ENCODE measurements at regions of chr16 and their contacts with region 1.

Region 1: DNA sequence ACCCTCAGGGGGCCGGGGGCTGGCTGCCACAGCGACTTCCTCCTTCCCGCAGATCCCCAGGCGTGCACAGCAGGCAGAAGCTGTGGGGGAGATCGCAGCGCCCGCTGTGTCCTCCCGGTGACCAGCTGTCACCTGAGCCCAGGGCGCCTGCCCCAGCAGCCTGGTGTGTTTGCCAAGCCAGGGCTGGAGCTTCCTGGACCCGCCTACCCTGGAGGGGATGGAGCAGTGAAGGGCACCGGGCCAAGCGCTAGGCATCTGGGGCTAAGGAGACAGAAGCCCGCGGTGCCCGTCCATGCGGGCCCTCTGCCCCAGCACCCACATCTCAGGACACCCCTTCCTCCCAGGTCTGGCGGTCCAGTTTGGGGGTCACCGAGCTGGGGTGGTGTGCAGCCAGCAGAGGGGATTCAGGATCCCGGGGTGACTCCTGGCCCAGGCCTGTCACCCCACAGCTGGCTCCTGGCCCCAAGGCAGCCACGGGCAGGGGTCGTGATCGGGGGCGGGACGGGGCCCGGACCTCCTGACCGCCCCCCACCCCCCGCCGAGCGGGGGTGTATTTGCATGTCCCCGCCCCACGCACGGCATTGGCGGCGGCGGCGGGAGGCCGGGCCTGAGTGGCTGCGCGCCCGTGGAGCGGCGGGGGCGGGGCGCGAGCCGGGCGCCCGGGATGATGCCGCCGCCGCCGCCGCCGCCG is at the start of gene RAB26:
- DNase-seq: peak in 1 of 2 experiments; percentile 90
- H3K4me3 ChIP-seq: peak within 1 kb of the TSS; percentile 37 to 85 (median 48)
- H3K27ac ChIP-seq: no peak within 1 kb of the TSS
- H3K4me1 ChIP-seq: peaks cover 3 to 36% (median 27%) of the 10 kb centered on the region in 4 experiments
- H3K27me3 ChIP-seq: peaks cover 0 to 11% (median 5%) of the 10 kb centered on the region in 4 experiments; a peak in 3 of 7 replicates
- CTCF ChIP-seq: no peak
- EP300 ChIP-seq: no peak
- POLR2A ChIP-seq: no peak
- RAD21 ChIP-seq: no peak; a peak in 1 of 4 replicates
- total RNA-seq, gene RAB26: 4.3 and 5.3 TPM in 2 replicates

Region 2: DNA sequence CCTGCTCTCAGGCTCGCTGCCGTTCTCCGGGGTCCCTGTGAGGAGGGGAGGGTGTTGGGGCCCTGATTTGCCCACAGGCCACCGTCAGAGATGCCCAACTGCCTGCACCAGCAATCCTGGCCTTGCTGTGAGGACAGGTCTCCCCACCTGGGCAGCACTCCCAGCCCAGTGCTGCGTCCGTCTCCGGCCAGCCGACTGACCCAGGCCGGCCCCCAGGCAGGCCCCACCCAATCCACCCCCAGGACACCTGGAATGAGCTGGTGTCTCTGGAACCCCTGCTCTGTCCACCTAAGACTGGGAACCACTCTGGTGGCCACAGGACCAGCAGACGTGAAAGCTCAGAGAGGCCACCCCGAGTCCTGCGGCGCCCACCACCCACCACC is 32.5 kb before region 1 on chr16:
- CTCF ChIA-PET with region 1: no interaction called
- POLR2A ChIA-PET with region 1: no interaction called
- DNase-seq: no peak
- H3K4me3 ChIP-seq: no peak overlapping the region
- H3K27ac ChIP-seq: no peak overlapping the region
- H3K4me1 ChIP-seq: no peaks in the 10 kb centered on the region
- H3K27me3 ChIP-seq: no peaks in the 10 kb centered on the region
- CTCF ChIP-seq: no peak
- EP300 ChIP-seq: no peak
- POLR2A ChIP-seq: no peak
- RAD21 ChIP-seq: no peak

Region 3: DNA sequence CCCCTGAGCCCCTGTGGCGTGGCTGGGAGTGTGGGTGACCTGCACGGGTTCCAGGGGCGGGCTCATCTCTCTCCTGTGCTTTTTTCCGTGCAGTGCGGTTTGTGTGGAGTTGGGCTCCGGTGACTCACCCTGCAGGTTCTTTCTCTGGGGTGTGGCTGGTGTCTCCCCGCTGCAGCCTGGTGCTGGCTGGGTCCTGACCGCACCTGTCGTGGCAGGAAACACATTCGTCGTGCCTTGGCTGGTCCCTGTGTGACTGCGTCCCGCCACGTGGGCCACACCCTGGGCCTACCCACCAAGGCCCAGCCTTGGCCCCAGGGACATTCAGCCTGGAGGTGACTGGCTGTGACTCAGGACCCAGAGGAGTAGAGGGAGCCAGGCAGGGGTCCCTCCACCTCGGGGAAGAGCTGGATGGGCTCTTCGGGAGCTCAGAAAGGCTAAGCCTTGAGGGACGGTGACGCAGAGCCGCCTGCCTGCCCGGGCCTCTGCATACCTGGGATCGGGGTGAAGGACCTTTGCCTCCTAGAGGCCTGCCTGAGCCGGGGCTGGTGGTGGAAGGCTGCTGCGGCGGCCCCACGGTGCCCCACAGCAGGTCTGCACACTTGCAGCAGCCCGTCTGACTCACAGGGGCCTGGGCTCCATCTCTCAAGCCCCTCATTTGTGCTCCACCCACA is 15.2 kb after region 1 on chr16:
- CTCF ChIA-PET with region 1: interaction called, 3 read pairs
- POLR2A ChIA-PET with region 1: interaction called, 312 read pairs
- DNase-seq: no peak
- H3K4me3 ChIP-seq: no peak overlapping the region
- H3K27ac ChIP-seq: no peak overlapping the region
- H3K4me1 ChIP-seq: peaks cover 0 to 15% (median 8%) of the 10 kb centered on the region in 4 experiments; a peak in 3 of 7 replicates
- H3K27me3 ChIP-seq: no peaks in the 10 kb centered on the region
- CTCF ChIP-seq: no peak
- EP300 ChIP-seq: no peak
- POLR2A ChIP-seq: no peak
- RAD21 ChIP-seq: no peak

Region 4: DNA sequence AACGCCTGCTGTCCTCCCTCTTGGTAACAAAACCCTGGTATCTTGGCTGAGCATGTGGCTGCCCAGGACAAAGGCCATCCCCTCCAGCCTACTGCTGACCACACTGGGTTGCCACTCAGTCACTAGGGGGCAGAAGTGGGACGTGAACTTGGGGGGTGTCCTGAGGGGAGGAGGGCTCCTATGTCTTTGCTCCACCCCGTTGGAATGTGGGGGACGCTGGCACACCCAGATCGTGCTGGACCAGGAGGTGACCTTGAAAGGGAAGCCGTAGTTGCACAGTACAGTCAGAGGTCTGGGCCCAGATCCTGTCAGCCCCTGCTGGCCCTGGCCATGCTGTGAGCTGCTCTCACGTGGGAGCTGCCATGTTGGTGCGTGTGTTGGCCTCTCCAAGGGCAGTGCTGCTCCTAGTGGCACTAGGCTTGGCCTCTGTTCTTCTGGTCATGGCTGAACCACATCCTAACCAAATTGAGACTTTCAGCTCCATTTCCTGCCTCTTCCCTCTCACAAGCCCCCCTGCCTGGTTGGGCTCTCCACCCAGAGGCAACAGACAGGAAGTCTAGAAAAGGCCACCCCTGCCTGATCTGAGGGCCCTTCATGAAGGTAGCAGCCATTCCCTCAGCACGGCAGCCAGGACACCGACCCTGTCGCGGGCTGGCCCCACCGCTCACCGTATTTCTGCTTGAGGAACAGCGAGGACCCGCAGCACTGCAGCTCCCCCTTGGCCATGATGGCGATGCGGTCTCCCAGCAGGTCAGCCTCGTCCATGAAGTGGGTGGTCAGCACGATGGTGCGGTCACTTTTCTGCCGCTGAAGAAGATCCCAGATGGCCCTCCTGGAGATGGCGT is 148.8 kb after region 1 on chr16:
- CTCF ChIA-PET with region 1: no interaction called
- POLR2A ChIA-PET with region 1: no interaction called
- DNase-seq: peak; percentile 38 to 71
- H3K4me3 ChIP-seq: no peak overlapping the region
- H3K27ac ChIP-seq: no peak overlapping the region
- H3K4me1 ChIP-seq: peaks cover 0 to 4% (median 1%) of the 10 kb centered on the region in 4 experiments; a peak in 3 of 7 replicates
- H3K27me3 ChIP-seq: no peaks in the 10 kb centered on the region
- CTCF ChIP-seq: peak; percentile 64 to 83 (median 82)
- EP300 ChIP-seq: no peak
- POLR2A ChIP-seq: no peak
- RAD21 ChIP-seq: peak; percentile 64 to 74